Naive thymus-derived CD4-positive, alpha-beta T cell (primary cell): ENCODE measurements at regions of chr5 and their contacts with region 1.

Region 1: DNA sequence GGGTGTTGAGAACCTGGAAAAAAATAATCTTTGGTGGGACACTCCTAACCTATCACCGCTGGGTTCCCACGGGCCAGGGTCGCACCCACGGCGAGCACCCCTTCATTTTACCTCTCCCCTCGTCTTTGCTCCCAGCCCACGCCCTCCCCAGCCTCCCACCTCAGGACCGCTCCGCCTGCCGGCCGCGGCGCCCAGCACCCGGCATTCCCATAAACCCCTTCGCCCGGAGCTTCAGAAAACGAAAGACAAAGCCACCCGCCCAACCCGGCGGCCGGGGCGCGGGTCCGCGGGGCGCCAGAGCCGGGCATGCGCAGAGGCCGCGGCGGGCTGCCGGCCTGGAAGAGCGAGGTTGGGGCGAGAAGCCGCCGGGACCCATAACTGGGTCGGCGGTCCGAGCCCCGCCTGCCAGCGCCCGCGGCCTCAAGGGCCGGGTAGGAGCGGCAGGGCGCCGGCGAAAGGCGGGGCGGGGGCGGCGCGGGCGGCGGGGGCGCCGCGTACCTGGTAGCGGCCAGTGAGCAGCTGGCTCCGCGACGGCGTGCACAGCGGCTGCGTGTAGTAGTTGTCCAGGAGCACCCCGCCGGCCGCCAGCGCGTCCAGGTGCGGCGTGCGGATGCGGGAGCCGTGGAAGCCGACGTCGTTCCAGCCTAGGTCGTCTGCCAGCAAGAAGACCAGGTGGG is 533 bp downstream of the ARSB start:
- DNase-seq: peak; percentile 62 to 87 (median 67)
- ATAC-seq: peak; percentile 81
- H3K4me3 ChIP-seq: peak overlapping the region; percentile 79
- H3K4me3 Mint-ChIP-seq: peak overlapping the region; percentile 87 to 98 (median 92)
- H3K27ac ChIP-seq: peak overlapping the region; percentile 76
- H3K27ac Mint-ChIP-seq: peak overlapping the region; percentile 75 to 98 (median 91)
- H3K4me1 ChIP-seq: peaks cover 5 to 13% of the 10 kb centered on the region in 2 donors
- H3K4me1 Mint-ChIP-seq: peaks cover 15 to 30% (median 26%) of the 10 kb centered on the region in 7 donors
- H3K27me3 ChIP-seq: no peaks in the 10 kb centered on the region
- H3K27me3 Mint-ChIP-seq: no peaks in the 10 kb centered on the region

Region 2: DNA sequence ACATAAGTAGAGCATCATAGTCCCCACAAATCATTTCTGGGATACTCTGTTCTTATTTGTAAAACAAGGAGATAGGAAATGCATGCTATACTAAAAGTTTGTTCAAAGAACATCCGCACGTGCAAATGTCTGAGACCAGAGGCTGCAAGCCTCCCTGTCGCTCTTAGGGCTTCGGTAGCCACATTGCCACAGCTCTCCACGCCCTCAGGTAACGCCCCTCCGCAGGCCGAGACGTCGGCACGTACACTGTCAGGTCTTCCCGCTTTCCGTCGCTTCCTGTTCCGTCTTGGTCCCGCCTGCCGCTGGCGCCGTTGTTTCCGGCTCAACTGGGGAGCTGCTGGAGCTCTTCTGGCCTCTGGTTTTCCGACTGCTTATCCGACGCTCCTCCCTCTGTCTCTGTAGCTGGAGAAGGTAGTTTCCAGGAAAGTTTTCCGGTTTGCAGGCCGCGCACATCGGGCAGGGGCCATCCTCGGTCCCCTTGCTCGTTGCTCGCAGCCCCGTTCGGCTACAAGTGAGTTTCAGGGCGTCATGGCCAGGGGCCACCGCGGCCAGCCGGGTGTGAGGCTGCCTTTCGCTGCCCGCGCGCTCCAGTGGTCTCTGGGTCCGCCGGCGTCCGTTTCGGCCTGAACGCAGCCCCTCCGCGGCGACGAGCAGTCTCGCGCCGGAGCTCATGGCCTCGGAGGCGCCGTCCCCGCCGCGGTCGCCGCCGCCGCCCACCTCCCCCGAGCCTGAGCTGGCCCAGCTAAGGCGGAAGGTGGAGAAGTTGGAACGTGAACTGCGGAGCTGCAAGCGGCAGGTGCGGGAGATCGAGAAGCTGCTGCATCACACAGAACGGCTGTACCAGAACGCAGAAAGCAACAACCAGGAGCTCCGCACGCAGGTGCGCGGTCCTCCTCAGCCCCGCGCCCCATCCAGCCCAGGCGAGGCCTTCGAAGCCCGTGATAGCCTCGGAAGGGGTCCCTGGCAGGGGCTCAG is 1954.2 kb before region 1 on chr5 and contains the start of gene AGGF1:
- CTCF ChIA-PET with region 1: no interaction called
- POLR2A ChIA-PET with region 1: no interaction called
- intact Hi-C with region 1: loop called in 1 of 2 experiments (anchors 10 kb)
- DNase-seq: peak; percentile 69 to 93 (median 90)
- ATAC-seq: peak; percentile 99
- H3K4me3 ChIP-seq: peak within 1 kb of the TSS; percentile 94
- H3K4me3 Mint-ChIP-seq: peak within 1 kb of the TSS; percentile 77 to 97 (median 94)
- H3K27ac ChIP-seq: peak within 1 kb of the TSS; percentile 86
- H3K27ac Mint-ChIP-seq: peak within 1 kb of the TSS; percentile 88 to 97 (median 92)
- H3K4me1 ChIP-seq: peaks cover 11 to 24% of the 10 kb centered on the region in 2 donors
- H3K4me1 Mint-ChIP-seq: peaks cover 19 to 58% (median 40%) of the 10 kb centered on the region in 7 donors
- H3K27me3 ChIP-seq: no peaks in the 10 kb centered on the region
- H3K27me3 Mint-ChIP-seq: peaks cover 0 to 9% (median 0%) of the 10 kb centered on the region in 5 donors
- total RNA-seq, gene AGGF1: 17.2 to 32.4 (median 29.2) TPM

Region 3: DNA sequence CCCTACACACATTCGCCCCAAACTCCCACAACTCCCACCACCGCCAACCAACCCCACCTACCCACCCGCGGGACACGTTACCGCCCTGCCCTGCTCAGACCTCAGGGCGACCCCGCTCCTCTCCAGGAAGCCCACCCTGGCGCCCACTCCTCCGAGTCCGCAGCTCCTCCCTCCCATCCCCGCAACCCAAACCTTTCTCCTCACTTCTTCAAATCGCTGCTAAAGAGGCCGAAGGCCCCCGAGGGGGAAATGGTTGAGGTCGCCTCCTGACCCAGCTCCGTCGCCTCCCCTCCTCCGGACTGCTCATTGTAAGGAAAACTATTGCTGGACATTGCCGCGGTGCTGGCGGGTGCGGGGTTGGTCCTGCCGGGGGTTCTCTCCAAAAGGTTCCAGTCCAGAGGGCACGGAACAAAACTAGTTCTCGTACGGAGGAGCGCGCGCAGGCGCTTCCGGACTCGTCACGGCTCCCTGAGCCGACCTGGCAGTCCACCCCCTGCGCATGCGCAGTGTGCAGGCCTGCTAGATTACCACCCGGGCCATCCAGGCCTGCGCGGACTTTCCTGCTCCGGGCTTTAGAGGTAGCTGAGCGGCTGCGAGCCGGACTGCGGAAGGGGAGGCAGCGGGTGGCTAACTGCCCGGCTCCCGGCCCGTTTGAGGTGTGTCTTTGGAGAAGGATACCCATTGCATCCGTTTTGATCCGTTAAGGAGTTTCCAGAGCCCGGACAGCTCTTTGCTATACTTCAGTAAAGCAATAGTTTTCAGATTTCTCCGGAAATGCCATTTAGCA is 690.1 kb before region 1 on chr5 and contains the start of gene AP3B1:
- CTCF ChIA-PET with region 1: no interaction called
- POLR2A ChIA-PET with region 1: interaction called, 4 read pairs
- intact Hi-C with region 1: loop called (anchors 1 kb)
- DNase-seq: peak; percentile 94 to 98 (median 96)
- ATAC-seq: peak; percentile 97
- H3K4me3 ChIP-seq: peak within 1 kb of the TSS; percentile 98
- H3K4me3 Mint-ChIP-seq: peak within 1 kb of the TSS; percentile 86 to 100 (median 98)
- H3K27ac ChIP-seq: peak within 1 kb of the TSS; percentile 88
- H3K27ac Mint-ChIP-seq: peak within 1 kb of the TSS; percentile 77 to 99 (median 97)
- H3K4me1 ChIP-seq: peaks cover 5 to 9% of the 10 kb centered on the region in 2 donors
- H3K4me1 Mint-ChIP-seq: peaks cover 27 to 50% (median 46%) of the 10 kb centered on the region in 7 donors
- H3K27me3 ChIP-seq: no peaks in the 10 kb centered on the region
- H3K27me3 Mint-ChIP-seq: peaks cover 0 to 11% (median 0%) of the 10 kb centered on the region in 5 donors
- total RNA-seq, gene AP3B1: 30.2 to 45.0 (median 37.2) TPM

Region 4: DNA sequence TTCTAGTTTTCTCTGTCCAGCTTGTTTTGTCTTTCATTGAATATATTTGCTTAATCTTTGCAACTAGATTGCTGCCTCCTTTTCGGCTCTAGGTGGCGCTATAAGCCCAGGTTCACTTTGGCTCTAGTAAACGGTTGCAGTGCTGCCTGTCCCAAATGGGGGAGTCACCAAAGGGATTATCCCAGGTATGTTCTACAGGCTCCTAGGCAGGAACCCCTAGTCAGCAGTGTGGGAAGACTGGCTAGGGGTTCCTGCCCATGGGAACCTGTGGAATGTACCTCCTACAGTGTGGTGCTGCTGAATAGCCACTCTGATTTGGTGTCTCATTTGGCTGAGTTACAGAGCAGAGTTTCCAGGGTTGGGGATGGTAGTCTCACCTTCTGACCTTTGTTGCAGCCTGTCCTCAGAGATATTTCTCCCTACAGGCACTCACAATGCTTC is 84.6 kb before region 1 on chr5:
- CTCF ChIA-PET with region 1: no interaction called
- POLR2A ChIA-PET with region 1: no interaction called
- intact Hi-C with region 1: loop called in 1 of 2 experiments (anchors 5 kb)
- DNase-seq: peak in 1 of 9 donors; percentile 33
- ATAC-seq: no peak
- H3K4me3 ChIP-seq: no peak overlapping the region
- H3K4me3 Mint-ChIP-seq: no peak overlapping the region
- H3K27ac ChIP-seq: no peak overlapping the region
- H3K27ac Mint-ChIP-seq: no peak overlapping the region
- H3K4me1 ChIP-seq: no peaks in the 10 kb centered on the region
- H3K4me1 Mint-ChIP-seq: no peaks in the 10 kb centered on the region
- H3K27me3 ChIP-seq: no peaks in the 10 kb centered on the region
- H3K27me3 Mint-ChIP-seq: no peaks in the 10 kb centered on the region

Region 5: GRCh38 chr5:79005151-79005550 is 20.6 kb after region 1 on chr5:
- CTCF ChIA-PET with region 1: no interaction called
- POLR2A ChIA-PET with region 1: no interaction called
- intact Hi-C with region 1: no loop called
- DNase-seq: no peak
- ATAC-seq: no peak
- H3K4me3 ChIP-seq: no peak overlapping the region
- H3K4me3 Mint-ChIP-seq: no peak overlapping the region
- H3K27ac ChIP-seq: no peak overlapping the region
- H3K27ac Mint-ChIP-seq: no peak overlapping the region
- H3K4me1 ChIP-seq: no peaks in the 10 kb centered on the region
- H3K4me1 Mint-ChIP-seq: no peaks in the 10 kb centered on the region
- H3K27me3 ChIP-seq: no peaks in the 10 kb centered on the region
- H3K27me3 Mint-ChIP-seq: peaks cover 15 to 51% (median 26%) of the 10 kb centered on the region in 5 donors

Region 6: DNA sequence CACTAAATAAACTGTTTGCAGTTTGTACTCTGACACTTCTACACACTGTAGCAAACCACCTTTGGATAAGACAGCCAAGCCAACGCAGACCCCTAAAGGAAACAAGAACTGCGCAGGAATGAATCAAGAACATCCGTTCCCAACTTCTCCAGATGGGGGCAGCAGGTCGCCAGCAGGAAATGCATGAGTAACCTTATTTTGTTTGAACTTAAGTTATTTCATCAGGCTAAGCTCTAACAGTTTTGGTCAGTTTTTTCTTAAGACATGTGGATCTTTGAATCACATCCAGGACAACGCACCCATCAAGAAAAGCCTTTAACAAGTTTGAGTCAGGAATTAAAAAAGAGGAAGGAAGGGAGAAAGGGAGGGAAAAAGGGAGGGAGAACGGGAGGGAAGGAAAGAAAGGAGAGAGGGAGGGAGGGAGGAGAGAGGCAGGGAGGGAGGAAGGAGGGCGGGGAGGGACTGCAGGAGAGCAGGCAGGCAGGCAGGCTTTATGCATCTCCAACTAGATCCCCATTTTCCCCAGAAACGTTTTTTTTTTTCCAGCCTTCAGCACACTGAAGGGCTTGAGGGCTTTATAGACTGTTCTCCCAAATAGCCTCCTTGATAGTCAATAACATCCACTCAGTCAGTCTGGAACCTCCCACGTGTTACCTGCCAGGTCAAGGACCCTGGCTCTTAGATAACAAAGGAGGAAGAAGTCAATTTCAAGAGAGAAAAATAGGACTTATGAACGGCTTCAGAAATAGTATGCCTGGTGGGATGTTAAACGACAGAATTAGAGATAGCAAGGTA is 149.3 kb after region 1 on chr5:
- CTCF ChIA-PET with region 1: interaction called, 7 read pairs
- POLR2A ChIA-PET with region 1: interaction called, 3 read pairs
- intact Hi-C with region 1: loop called (anchors 1 kb)
- DNase-seq: peak; percentile 26 to 60 (median 48)
- ATAC-seq: peak; percentile 84
- H3K4me3 ChIP-seq: peak overlapping the region; percentile 42
- H3K4me3 Mint-ChIP-seq: peak overlapping the region; percentile 45 to 80 (median 76)
- H3K27ac ChIP-seq: no peak overlapping the region
- H3K27ac Mint-ChIP-seq: peak overlapping the region in 4 of 9 donors; percentile 4 to 76 (median 42)
- H3K4me1 ChIP-seq: peaks cover 9 to 11% of the 10 kb centered on the region in 2 donors
- H3K4me1 Mint-ChIP-seq: peaks cover 7 to 17% (median 10%) of the 10 kb centered on the region in 7 donors
- H3K27me3 ChIP-seq: no peaks in the 10 kb centered on the region
- H3K27me3 Mint-ChIP-seq: peaks cover 0 to 9% (median 4%) of the 10 kb centered on the region in 5 donors

Region 7: GRCh38 chr5:80407735-80408482 is 1423.3 kb after region 1 on chr5 and contains the start of gene ZFYVE16:
- CTCF ChIA-PET with region 1: no interaction called
- POLR2A ChIA-PET with region 1: no interaction called
- intact Hi-C with region 1: loop called in 1 of 2 experiments (anchors 5 kb)
- DNase-seq: peak; percentile 93 to 98 (median 94)
- ATAC-seq: peak; percentile 93
- H3K4me3 ChIP-seq: peak within 1 kb of the TSS; percentile 94
- H3K4me3 Mint-ChIP-seq: peak within 1 kb of the TSS; percentile 91 to 99 (median 96)
- H3K27ac ChIP-seq: peak within 1 kb of the TSS; percentile 85
- H3K27ac Mint-ChIP-seq: peak within 1 kb of the TSS; percentile 97 to 100 (median 99)
- H3K4me1 ChIP-seq: peaks cover 0 to 3% of the 10 kb centered on the region in 2 donors
- H3K4me1 Mint-ChIP-seq: peaks cover 20 to 32% (median 21%) of the 10 kb centered on the region in 7 donors
- H3K27me3 ChIP-seq: no peaks in the 10 kb centered on the region
- H3K27me3 Mint-ChIP-seq: peaks cover 0 to 7% (median 0%) of the 10 kb centered on the region in 5 donors
- total RNA-seq, gene ZFYVE16: 12.0 to 32.0 (median 26.0) TPM